ENCODE measurements at regions of chr9 and their contacts with region 1.

Region 1: GRCh38 chr9:68584189-68585033 is 43.7 kb upstream of the TMEM252 start:
- DNase-seq: peak; percentile 92
- ATAC-seq: peak; percentile 99
- H3K4me3 Mint-ChIP-seq: no peak overlapping the region
- H3K27ac Mint-ChIP-seq: no peak overlapping the region
- H3K4me1 Mint-ChIP-seq: peaks cover 3% of the 10 kb centered on the region
- H3K27me3 Mint-ChIP-seq: peaks cover 6% of the 10 kb centered on the region

Region 2: GRCh38 chr9:68567565-68567964 is 16.8 kb before region 1 on chr9:
- CTCF ChIA-PET with region 1: interaction called, 21 read pairs
- POLR2A ChIA-PET with region 1: interaction called, 3 read pairs
- intact Hi-C with region 1: no loop called
- DNase-seq: no peak
- ATAC-seq: no peak
- H3K4me3 Mint-ChIP-seq: no peak overlapping the region
- H3K27ac Mint-ChIP-seq: no peak overlapping the region
- H3K4me1 Mint-ChIP-seq: no peaks in the 10 kb centered on the region
- H3K27me3 Mint-ChIP-seq: peaks cover 28% of the 10 kb centered on the region

Region 3: GRCh38 chr9:68704814-68705530 is 120.6 kb after region 1 on chr9 and contains the start of gene PIP5K1B:
- CTCF ChIA-PET with region 1: interaction called, 4 read pairs
- POLR2A ChIA-PET with region 1: no interaction called
- intact Hi-C with region 1: loop called in 1 of 2 experiments (anchors 1 kb)
- DNase-seq: peak; percentile 78
- ATAC-seq: peak; percentile 97
- H3K4me3 Mint-ChIP-seq: peak within 1 kb of the TSS; percentile 76
- H3K27ac Mint-ChIP-seq: no peak within 1 kb of the TSS
- H3K4me1 Mint-ChIP-seq: peaks cover 18% of the 10 kb centered on the region
- H3K27me3 Mint-ChIP-seq: peaks cover 64% of the 10 kb centered on the region
- total RNA-seq, gene PIP5K1B: 1.6 TPM

Region 4: GRCh38 chr9:68949271-68950000 is 365.0 kb after region 1 on chr9:
- CTCF ChIA-PET with region 1: interaction called, 5 read pairs
- POLR2A ChIA-PET with region 1: no interaction called
- intact Hi-C with region 1: loop called in 1 of 2 experiments (anchors 2 kb)
- DNase-seq: peak; percentile 55
- ATAC-seq: no peak
- H3K4me3 Mint-ChIP-seq: no peak overlapping the region
- H3K27ac Mint-ChIP-seq: peak overlapping the region; percentile 48
- H3K4me1 Mint-ChIP-seq: peaks cover 42% of the 10 kb centered on the region
- H3K27me3 Mint-ChIP-seq: peaks cover 13% of the 10 kb centered on the region

Region 5: DNA sequence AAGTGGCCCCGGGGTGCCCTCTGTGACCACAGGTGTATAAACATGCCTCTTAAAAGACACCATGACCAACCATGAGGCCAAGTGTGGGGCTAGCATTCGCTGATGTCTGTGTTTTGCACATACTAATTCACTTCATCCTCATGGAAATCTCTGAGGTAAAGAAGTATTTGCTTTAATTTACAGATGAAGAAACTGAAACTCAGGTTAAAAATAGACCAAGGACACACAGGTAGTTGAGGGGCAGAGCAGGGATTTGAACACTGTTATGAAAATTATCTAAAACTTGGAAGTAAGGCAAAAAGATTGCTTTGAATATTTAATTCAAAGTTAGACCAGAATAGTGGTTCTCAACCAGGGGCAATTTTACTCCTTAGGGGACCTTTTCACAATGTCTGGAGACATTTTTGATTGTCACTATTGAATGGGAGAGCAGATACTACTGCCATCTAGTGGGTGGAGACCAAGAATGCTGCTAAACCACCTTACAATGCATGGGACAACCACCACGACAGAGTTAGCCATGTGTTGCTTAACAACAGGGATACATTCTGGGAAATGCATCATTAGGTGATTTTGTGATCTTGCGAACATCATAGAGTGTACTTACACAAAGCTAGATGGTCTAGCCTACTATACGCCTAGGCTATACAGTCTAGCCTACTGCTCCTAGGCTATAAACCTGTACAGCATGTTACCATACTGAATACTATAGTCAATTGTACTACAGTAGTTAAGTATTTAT is 443.1 kb after region 1 on chr9:
- CTCF ChIA-PET with region 1: interaction called, 5 read pairs
- POLR2A ChIA-PET with region 1: no interaction called
- intact Hi-C with region 1: loop called (anchors 1 kb)
- DNase-seq: peak; percentile 57
- ATAC-seq: peak; percentile 86
- H3K4me3 Mint-ChIP-seq: no peak overlapping the region
- H3K27ac Mint-ChIP-seq: no peak overlapping the region
- H3K4me1 Mint-ChIP-seq: peaks cover 35% of the 10 kb centered on the region
- H3K27me3 Mint-ChIP-seq: no peaks in the 10 kb centered on the region